ENCODE measurements at regions of chr11 and their contacts with region 1.

Region 1: DNA sequence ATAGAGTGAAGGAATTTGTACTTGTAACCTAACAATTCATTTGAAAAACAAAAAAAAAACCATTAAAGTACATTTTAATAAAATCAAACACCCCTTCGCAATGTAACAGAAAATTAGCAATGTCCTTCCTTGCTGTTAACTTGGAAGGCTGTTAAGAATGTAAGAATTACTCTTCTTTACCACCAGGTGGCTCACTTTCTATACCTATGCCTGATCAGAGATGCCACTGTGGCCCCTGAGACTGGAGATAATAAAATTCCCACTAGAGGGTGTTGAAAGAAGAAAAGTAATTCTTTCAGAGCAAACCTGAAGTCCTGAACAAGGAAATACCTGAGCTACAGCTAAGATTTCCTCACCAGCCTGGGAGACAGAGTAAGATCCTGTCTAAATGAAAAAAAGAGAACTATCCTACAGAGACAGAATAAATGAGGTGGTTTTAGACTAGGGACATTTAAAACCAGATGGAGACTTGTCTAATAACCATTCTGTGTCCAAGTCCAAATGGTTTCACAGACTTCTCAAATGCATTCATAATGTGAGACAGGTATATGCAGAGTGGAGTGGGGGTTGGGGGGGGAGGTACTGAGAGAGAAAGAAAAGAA is 1089.3 kb downstream of the FAM181B start:
- DNase-seq: peak; percentile 38
- ATAC-seq: peak; percentile 78
- H3K4me3 ChIP-seq: no peak overlapping the region
- H3K27ac ChIP-seq: no peak overlapping the region
- H3K4me1 ChIP-seq: no peaks in the 10 kb centered on the region
- H3K27me3 ChIP-seq: no peaks in the 10 kb centered on the region
- CTCF ChIP-seq: peak; percentile 72

Region 2: GRCh38 chr11:81585390-81586192 is 58.7 kb before region 1 on chr11:
- CTCF ChIA-PET with region 1: no interaction called
- POLR2A ChIA-PET with region 1: no interaction called
- in situ Hi-C with region 1: no loop called
- intact Hi-C with region 1: no loop called
- DNase-seq: no peak
- ATAC-seq: no peak
- H3K4me3 ChIP-seq: no peak overlapping the region
- H3K27ac ChIP-seq: no peak overlapping the region
- H3K4me1 ChIP-seq: no peaks in the 10 kb centered on the region
- H3K27me3 ChIP-seq: no peaks in the 10 kb centered on the region
- CTCF ChIP-seq: no peak

Region 3: DNA sequence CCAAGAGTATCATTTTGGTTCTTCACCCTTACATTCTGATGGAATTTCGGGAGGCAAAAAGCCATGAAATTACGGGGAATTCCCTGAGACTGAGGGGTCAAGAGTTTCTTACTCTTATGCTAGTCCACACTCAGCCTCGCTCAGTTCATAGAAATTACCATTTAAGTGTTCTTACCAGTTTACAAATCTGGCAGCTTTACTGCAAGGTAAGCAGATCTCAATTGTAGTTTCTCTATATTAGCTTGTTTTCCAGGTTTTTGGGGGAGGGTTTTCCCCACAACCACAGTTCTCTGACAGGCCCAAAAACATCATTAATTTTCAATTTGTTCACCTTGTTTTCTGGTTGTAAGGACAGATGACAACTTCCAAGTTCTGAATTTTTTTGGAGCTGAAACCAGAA is 60.9 kb after region 1 on chr11:
- CTCF ChIA-PET with region 1: no interaction called
- POLR2A ChIA-PET with region 1: interaction called, 20 read pairs
- in situ Hi-C with region 1: no loop called
- intact Hi-C with region 1: no loop called
- DNase-seq: no peak
- ATAC-seq: no peak
- H3K4me3 ChIP-seq: no peak overlapping the region
- H3K27ac ChIP-seq: no peak overlapping the region
- H3K4me1 ChIP-seq: no peaks in the 10 kb centered on the region
- H3K27me3 ChIP-seq: no peaks in the 10 kb centered on the region
- CTCF ChIP-seq: no peak

Region 4: DNA sequence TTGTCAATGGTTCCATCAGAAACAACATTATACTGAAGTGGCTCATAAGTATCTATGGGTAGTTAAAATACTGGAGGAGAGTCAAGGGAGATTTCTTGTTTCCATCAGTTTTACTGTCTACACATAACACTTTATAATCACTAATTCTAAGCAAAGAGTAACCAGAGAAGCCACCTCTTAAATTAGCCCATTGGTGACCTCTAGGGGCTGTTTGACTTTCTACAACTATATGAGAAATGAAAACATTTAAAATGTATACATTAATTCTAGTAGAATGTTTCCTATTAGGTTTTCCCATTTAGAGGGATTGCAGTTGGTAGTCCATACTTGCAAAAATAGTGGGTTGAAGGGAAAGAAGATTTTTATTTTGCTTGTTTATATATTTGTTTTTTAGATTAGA is 585.0 kb after region 1 on chr11:
- CTCF ChIA-PET with region 1: interaction called, 3 read pairs
- POLR2A ChIA-PET with region 1: no interaction called
- in situ Hi-C with region 1: no loop called
- intact Hi-C with region 1: loop called (anchors 2 kb)
- DNase-seq: no peak
- ATAC-seq: no peak
- H3K4me3 ChIP-seq: no peak overlapping the region
- H3K27ac ChIP-seq: no peak overlapping the region
- H3K4me1 ChIP-seq: no peaks in the 10 kb centered on the region
- H3K27me3 ChIP-seq: no peaks in the 10 kb centered on the region
- CTCF ChIP-seq: peak; percentile 45; the same call in 1 of the 2 replicates

Region 5: GRCh38 chr11:82701847-82702520 is 1057.6 kb after region 1 on chr11:
- CTCF ChIA-PET with region 1: no interaction called
- POLR2A ChIA-PET with region 1: no interaction called
- in situ Hi-C with region 1: no loop called
- intact Hi-C with region 1: loop called (anchors 5 kb)
- DNase-seq: no peak
- ATAC-seq: peak; percentile 68
- H3K4me3 ChIP-seq: no peak overlapping the region
- H3K27ac ChIP-seq: no peak overlapping the region
- H3K4me1 ChIP-seq: no peaks in the 10 kb centered on the region
- H3K27me3 ChIP-seq: peaks cover 6% of the 10 kb centered on the region; the same call in 1 of the 2 replicates
- CTCF ChIP-seq: peak; percentile 79

Measured in Panc1 (cell line).